ENCODE measurements at regions of chr19 and their contacts with region 1.

Region 1: GRCh38 chr19:55632463-55632834 is 8.1 kb upstream of the ZNF784 start:
- DNase-seq: peak; percentile 62
- H3K4me3 ChIP-seq: peak overlapping the region in 1 of 2 experiments; percentile 30; a peak in 1 of 4 replicates
- H3K27ac ChIP-seq: peak overlapping the region in 1 of 2 experiments; percentile 26; a peak in 1 of 4 replicates
- H3K4me1 ChIP-seq: peaks cover 0 to 14% of the 10 kb centered on the region in 2 experiments; a peak in 1 of 4 replicates
- H3K27me3 ChIP-seq: no peaks in the 10 kb centered on the region
- CTCF ChIP-seq: peak; percentile 83
- EP300 ChIP-seq: no peak
- RAD21 ChIP-seq: peak; percentile 82

Region 2: DNA sequence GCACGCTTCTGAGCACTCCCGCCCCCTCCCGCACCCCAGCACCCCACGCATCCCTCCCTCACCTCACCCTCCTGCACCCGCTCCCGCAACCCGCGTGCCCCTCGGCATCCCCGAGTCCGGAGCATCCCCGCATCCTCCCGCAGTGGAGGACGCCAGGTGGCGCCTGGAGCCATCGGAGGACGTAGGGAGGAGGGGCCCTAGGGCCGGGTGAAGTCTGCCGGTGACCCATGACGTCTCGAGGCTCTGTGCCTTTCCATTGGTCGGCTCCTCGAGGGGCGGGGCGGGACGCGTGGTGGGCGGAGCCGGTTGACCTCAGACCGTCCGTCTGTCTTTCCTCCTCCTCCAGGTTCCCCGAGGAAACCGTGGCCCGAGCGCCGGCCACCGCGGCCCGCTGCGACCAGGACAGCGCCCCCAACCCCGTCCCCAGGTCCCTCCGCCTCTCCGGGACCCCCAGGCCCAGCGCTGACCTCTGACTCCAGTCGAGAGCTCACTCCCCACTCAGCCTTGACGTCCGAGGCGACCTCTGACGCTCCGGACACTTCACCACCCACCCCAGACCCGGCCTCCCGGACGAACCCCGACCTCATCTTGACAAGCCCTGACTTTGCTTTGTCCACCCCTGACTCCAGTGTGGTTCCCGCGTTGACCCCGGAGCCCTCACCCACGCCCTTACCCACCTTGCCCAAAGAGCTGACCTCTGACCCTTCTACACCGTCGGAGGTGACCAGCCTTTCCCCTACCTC is 115.4 kb before region 1 on chr19:
- CTCF ChIA-PET with region 1: interaction called, 30 read pairs
- POLR2A ChIA-PET with region 1: interaction called, 3 read pairs
- DNase-seq: peak; percentile 100
- H3K4me3 ChIP-seq: peak overlapping the region; percentile 46 to 54
- H3K27ac ChIP-seq: peak overlapping the region; percentile 38 to 39; a peak in 1 of 4 replicates
- H3K4me1 ChIP-seq: peaks cover 0 to 11% of the 10 kb centered on the region in 2 experiments; a peak in 1 of 4 replicates
- H3K27me3 ChIP-seq: no peaks in the 10 kb centered on the region
- CTCF ChIP-seq: peak; percentile 83
- EP300 ChIP-seq: no peak
- RAD21 ChIP-seq: peak; percentile 91

Region 3: GRCh38 chr19:55563261-55563690 is 69.2 kb before region 1 on chr19:
- CTCF ChIA-PET with region 1: no interaction called
- POLR2A ChIA-PET with region 1: no interaction called
- DNase-seq: peak; percentile 46
- H3K4me3 ChIP-seq: no peak overlapping the region
- H3K27ac ChIP-seq: no peak overlapping the region
- H3K4me1 ChIP-seq: no peaks in the 10 kb centered on the region
- H3K27me3 ChIP-seq: no peaks in the 10 kb centered on the region
- CTCF ChIP-seq: no peak
- EP300 ChIP-seq: no peak
- RAD21 ChIP-seq: no peak

Region 4: GRCh38 chr19:55653758-55654539 is 21.5 kb after region 1 on chr19:
- CTCF ChIA-PET with region 1: interaction called, 36 read pairs
- POLR2A ChIA-PET with region 1: interaction called, 5 read pairs
- DNase-seq: peak; percentile 92
- H3K4me3 ChIP-seq: peak overlapping the region; percentile 92 to 96
- H3K27ac ChIP-seq: peak overlapping the region; percentile 99 to 100
- H3K4me1 ChIP-seq: peaks cover 14 to 33% of the 10 kb centered on the region in 2 experiments; a peak in 3 of 4 replicates
- H3K27me3 ChIP-seq: no peaks in the 10 kb centered on the region
- CTCF ChIP-seq: peak; percentile 99
- EP300 ChIP-seq: no peak
- RAD21 ChIP-seq: peak; percentile 61